Activated CD8-positive, alpha-beta memory T cell treated with anti-CD3 and anti-CD28 coated beads, Interleukin-2, amount 10 ng/mL, durations not matched to agents 7 days and 5 days (primary cell): ENCODE measurements at regions of chr3 and their contacts with region 1.

Region 1: GRCh38 chr3:114323546-114324254 is 29.9 kb downstream of the TIGIT start:
- DNase-seq: no peak
- ATAC-seq: peak; percentile 62
- H3K4me3 Mint-ChIP-seq: peak overlapping the region; percentile 16
- H3K27ac Mint-ChIP-seq: peak overlapping the region; percentile 79
- H3K4me1 Mint-ChIP-seq: peaks cover 78% of the 10 kb centered on the region
- H3K27me3 Mint-ChIP-seq: no peaks in the 10 kb centered on the region

Region 2: GRCh38 chr3:113852506-113852905 is 471.2 kb before region 1 on chr3:
- CTCF ChIA-PET with region 1: no interaction called
- DNase-seq: no peak
- ATAC-seq: no peak
- H3K4me3 Mint-ChIP-seq: no peak overlapping the region
- H3K27ac Mint-ChIP-seq: no peak overlapping the region
- H3K4me1 Mint-ChIP-seq: no peaks in the 10 kb centered on the region
- H3K27me3 Mint-ChIP-seq: peaks cover 16% of the 10 kb centered on the region

Region 3: GRCh38 chr3:113873814-113874526 is 449.7 kb before region 1 on chr3:
- CTCF ChIA-PET with region 1: no interaction called
- DNase-seq: no peak
- ATAC-seq: no peak
- H3K4me3 Mint-ChIP-seq: no peak overlapping the region
- H3K27ac Mint-ChIP-seq: no peak overlapping the region
- H3K4me1 Mint-ChIP-seq: no peaks in the 10 kb centered on the region
- H3K27me3 Mint-ChIP-seq: peaks cover 4% of the 10 kb centered on the region

Region 4: GRCh38 chr3:114299421-114299820 is 24.3 kb before region 1 on chr3:
- CTCF ChIA-PET with region 1: interaction called, 15 read pairs
- DNase-seq: peak; percentile 70
- ATAC-seq: peak; percentile 45
- H3K4me3 Mint-ChIP-seq: peak overlapping the region; percentile 57
- H3K27ac Mint-ChIP-seq: peak overlapping the region; percentile 79
- H3K4me1 Mint-ChIP-seq: peaks cover 73% of the 10 kb centered on the region
- H3K27me3 Mint-ChIP-seq: no peaks in the 10 kb centered on the region

Region 5: GRCh38 chr3:114308830-114309229 is 14.9 kb before region 1 on chr3:
- CTCF ChIA-PET with region 1: interaction called, 22 read pairs
- DNase-seq: peak; percentile 84
- ATAC-seq: peak; percentile 87
- H3K4me3 Mint-ChIP-seq: peak overlapping the region; percentile 54
- H3K27ac Mint-ChIP-seq: peak overlapping the region; percentile 95
- H3K4me1 Mint-ChIP-seq: peaks cover 82% of the 10 kb centered on the region
- H3K27me3 Mint-ChIP-seq: no peaks in the 10 kb centered on the region

Region 6: DNA sequence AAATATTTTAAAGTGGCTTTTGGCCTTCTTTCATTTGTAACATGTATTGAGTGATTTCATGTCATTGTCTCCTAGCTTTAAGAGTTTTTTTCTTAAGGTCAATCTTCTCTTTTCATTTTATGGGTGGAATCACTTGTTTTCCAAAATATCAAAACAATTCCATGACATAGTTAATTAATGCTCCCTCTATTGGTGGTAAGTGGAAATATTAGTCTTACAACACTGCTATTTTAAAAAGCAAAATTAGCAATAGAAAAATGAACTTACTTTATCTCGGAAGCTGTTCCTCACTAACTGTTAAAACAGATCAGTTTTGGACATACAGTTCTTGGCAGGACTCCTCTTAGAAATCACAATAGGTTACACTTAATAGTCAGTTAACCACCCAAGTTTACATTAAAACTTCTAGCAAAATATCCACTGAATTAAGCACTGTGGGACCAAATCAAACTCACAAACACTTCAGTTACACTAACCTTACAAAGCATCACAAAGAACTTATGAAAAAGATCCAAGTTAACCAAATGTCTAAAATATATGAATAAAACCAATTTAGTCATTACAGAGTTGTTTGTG is 12.5 kb after region 1 on chr3:
- CTCF ChIA-PET with region 1: interaction called, 10 read pairs
- DNase-seq: no peak
- ATAC-seq: no peak
- H3K4me3 Mint-ChIP-seq: no peak overlapping the region
- H3K27ac Mint-ChIP-seq: peak overlapping the region; percentile 38
- H3K4me1 Mint-ChIP-seq: peaks cover 77% of the 10 kb centered on the region
- H3K27me3 Mint-ChIP-seq: no peaks in the 10 kb centered on the region